Activated naive CD4-positive, alpha-beta T cell treated with anti-CD3 and anti-CD28 coated beads for 36 hours (primary cell): ENCODE measurements at regions of chr1 and their contacts with region 1.

Region 1: DNA sequence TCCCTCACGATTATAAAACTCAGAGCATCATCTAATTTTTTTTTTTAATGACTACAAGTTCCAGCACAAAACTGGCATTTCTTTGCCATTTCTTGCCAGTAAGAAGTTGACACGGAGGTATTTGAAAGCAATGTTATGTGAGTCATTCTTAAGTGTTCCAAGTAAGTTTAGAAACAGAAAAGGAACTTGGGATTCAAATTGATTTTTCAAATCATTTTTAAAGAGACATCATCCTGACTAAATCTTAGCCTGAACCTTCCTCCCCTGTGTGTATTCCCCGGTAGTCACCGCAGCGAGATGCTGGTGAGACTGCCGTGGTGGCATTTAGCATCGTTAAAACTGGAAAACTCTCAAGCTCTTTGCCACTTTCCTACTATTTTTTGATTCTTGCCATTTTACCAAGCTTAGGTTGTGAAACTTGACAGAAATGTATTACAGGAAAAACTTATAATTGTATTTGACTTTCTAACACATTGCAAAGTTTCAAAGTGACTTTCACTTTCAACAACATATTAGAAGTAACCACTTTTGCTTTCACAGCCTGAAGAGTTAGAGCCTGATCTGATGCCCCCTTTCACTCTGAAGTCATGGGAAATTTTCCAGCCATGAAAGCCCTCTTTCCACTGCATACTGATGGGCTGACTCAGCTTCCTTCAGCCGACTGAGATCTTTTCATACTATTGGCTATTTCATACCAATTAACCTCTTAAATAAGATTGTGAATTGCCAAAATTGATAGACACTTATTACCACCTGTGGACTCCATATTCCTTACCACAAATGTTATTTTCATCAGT is 61.4 kb downstream of the OLFML2B start:
- DNase-seq: peak; percentile 81
- H3K4me3 Mint-ChIP-seq: peak overlapping the region; percentile 64
- H3K27ac Mint-ChIP-seq: peak overlapping the region; percentile 96
- H3K4me1 Mint-ChIP-seq: peaks cover 61% of the 10 kb centered on the region
- H3K27me3 Mint-ChIP-seq: no peaks in the 10 kb centered on the region

Region 2: GRCh38 chr1:161549652-161550051 is 412.6 kb before region 1 on chr1 and contains the start of gene FCGR3A:
- CTCF ChIA-PET with region 1: no interaction called
- intact Hi-C with region 1: loop called (anchors 5 kb)
- DNase-seq: no peak
- H3K4me3 Mint-ChIP-seq: no peak within 1 kb of the TSS
- H3K27ac Mint-ChIP-seq: no peak within 1 kb of the TSS
- H3K4me1 Mint-ChIP-seq: peaks cover 7% of the 10 kb centered on the region
- H3K27me3 Mint-ChIP-seq: no peaks in the 10 kb centered on the region
- total RNA-seq, gene FCGR3A: 0.19 TPM in 1 of 2 experiments, not detected in the other

Region 3: GRCh38 chr1:161843156-161843555 is 119.1 kb before region 1 on chr1:
- CTCF ChIA-PET with region 1: interaction called, 4 read pairs
- intact Hi-C with region 1: loop called (anchors 5 kb)
- DNase-seq: peak; percentile 6
- H3K4me3 Mint-ChIP-seq: no peak overlapping the region
- H3K27ac Mint-ChIP-seq: no peak overlapping the region
- H3K4me1 Mint-ChIP-seq: peaks cover 30% of the 10 kb centered on the region
- H3K27me3 Mint-ChIP-seq: no peaks in the 10 kb centered on the region

Region 4: GRCh38 chr1:161915051-161915503 is 47.2 kb before region 1 on chr1:
- CTCF ChIA-PET with region 1: interaction called, 6 read pairs
- intact Hi-C with region 1: loop called (anchors 1 kb)
- DNase-seq: peak; percentile 83
- H3K4me3 Mint-ChIP-seq: no peak overlapping the region
- H3K27ac Mint-ChIP-seq: no peak overlapping the region
- H3K4me1 Mint-ChIP-seq: peaks cover 35% of the 10 kb centered on the region
- H3K27me3 Mint-ChIP-seq: no peaks in the 10 kb centered on the region

Region 5: GRCh38 chr1:161933592-161934588 is 28.4 kb before region 1 on chr1:
- CTCF ChIA-PET with region 1: interaction called, 4 read pairs
- intact Hi-C with region 1: loop called (anchors 1 kb)
- DNase-seq: peak; percentile 27
- H3K4me3 Mint-ChIP-seq: peak overlapping the region; percentile 48
- H3K27ac Mint-ChIP-seq: peak overlapping the region; percentile 83
- H3K4me1 Mint-ChIP-seq: peaks cover 53% of the 10 kb centered on the region
- H3K27me3 Mint-ChIP-seq: no peaks in the 10 kb centered on the region

Region 6: DNA sequence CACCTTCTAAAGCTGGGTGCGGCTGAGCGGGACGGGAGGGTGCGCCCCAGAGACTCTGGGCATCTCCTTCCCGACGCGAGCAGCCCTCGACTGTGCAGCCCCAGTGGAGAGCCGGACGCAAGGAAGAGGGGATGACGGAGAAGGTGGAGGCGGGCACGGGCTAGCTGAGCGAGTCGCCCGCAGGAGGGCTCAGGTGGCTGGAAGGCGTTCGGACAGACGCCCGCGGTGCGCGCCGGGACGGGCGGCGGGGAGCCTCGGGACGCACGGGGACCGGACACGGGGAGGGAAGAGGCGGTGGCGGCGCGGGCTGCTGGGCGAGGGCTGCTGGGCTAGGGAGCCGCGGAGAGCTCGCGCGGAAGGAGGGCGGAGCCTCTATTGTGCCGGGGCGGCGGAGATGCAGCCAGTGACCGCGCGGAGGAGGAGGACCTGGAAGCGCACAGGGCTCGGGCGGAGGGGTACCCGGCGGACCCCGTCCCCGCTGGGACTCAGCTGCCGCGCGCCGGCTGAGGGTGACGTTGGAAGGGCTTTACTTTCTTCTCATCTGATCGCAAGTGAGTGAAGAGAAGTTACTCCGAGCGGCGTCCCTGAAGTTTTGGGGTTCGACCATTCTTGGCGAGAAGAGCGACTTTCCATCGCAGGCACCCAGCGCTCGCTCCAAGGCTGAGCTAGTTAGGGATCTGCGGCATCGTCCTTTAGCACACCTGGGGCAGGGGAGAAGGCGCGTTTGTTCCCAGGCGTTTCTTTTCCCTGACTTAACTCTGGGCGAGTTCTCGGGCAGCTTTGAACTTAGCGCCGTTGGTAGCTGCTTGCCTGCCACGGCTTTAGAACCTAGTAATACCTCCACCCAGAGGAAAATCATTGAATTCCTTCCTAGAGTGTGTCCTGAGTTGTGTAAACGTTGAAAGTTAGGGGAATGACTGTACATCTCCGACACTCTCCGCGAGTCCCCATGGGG is 61.5 kb after region 1 on chr1 and contains the start of gene OLFML2B:
- CTCF ChIA-PET with region 1: interaction called, 9 read pairs
- intact Hi-C with region 1: loop called (anchors 1 kb)
- DNase-seq: peak; percentile 65
- H3K4me3 Mint-ChIP-seq: peak within 1 kb of the TSS; percentile 86
- H3K27ac Mint-ChIP-seq: no peak within 1 kb of the TSS
- H3K4me1 Mint-ChIP-seq: peaks cover 7% of the 10 kb centered on the region
- H3K27me3 Mint-ChIP-seq: peaks cover 18% of the 10 kb centered on the region
- total RNA-seq, gene OLFML2B: 1.7 to 2.3 TPM